CD4-positive, alpha-beta T cell (primary cell): ENCODE measurements at regions of chr19 and their contacts with region 1.

Region 1: GRCh38 chr19:19711934-19712828 is 20.7 kb downstream of the ZNF14 start:
- DNase-seq: no peak
- ATAC-seq: no peak
- H3K4me3 ChIP-seq: no peak overlapping the region
- H3K4me3 Mint-ChIP-seq: peak overlapping the region; percentile 7
- H3K27ac ChIP-seq: no peak overlapping the region
- H3K27ac Mint-ChIP-seq: peak overlapping the region; percentile 42
- H3K4me1 ChIP-seq: no peaks in the 10 kb centered on the region
- H3K4me1 Mint-ChIP-seq: no peaks in the 10 kb centered on the region
- H3K27me3 ChIP-seq: no peaks in the 10 kb centered on the region
- H3K27me3 Mint-ChIP-seq: no peaks in the 10 kb centered on the region
- CTCF ChIP-seq: no peak

Region 2: GRCh38 chr19:19677579-19677978 is 34.6 kb before region 1 on chr19:
- CTCF ChIA-PET with region 1: no interaction called
- POLR2A ChIA-PET with region 1: interaction called, 4 read pairs
- intact Hi-C with region 1: loop called in 1 of 2 experiments (anchors 5 kb)
- DNase-seq: no peak
- ATAC-seq: no peak
- H3K4me3 ChIP-seq: no peak overlapping the region
- H3K4me3 Mint-ChIP-seq: no peak overlapping the region
- H3K27ac ChIP-seq: no peak overlapping the region
- H3K27ac Mint-ChIP-seq: peak overlapping the region; percentile 55
- H3K4me1 ChIP-seq: peaks cover 19% of the 10 kb centered on the region
- H3K4me1 Mint-ChIP-seq: peaks cover 8% of the 10 kb centered on the region
- H3K27me3 ChIP-seq: no peaks in the 10 kb centered on the region
- H3K27me3 Mint-ChIP-seq: no peaks in the 10 kb centered on the region
- CTCF ChIP-seq: no peak

Region 3: DNA sequence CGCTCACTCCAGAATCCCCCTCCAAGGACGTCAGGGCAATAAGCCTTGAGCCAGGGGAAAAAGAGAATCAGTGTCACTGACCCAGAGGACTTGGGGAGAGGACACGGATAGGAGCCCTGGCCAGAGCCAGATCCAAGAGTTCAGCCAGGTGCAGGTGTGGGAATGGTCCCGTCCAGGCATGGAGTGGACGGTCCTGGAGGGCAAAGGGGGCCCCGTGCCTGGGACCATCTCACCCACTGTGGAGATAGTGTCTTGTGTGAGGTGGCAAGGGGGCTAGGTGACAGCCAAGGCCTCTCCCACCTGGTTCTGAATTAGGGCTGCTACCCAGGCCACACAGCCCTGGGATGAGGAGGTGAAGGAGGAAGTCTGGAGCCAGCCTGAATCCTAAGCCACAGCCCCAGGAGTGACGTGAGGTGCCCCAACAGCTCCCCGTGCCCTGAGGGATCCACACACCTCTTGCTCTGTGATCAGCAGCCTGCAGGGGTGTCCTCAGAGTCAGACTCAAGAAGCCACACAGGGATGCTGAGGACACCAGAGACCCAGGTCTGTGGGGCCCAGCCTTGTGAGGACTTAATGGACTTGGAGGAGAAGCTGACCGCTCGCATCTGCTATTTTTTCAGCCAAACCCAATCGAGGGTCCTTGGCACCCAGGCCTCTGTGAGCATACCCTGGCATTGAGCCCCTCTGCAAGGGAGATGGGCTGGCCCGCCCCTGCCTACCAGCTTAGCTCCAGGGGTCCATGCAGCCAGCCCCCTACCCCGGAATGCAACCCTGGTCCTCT is 37.1 kb after region 1 on chr19:
- CTCF ChIA-PET with region 1: no interaction called
- POLR2A ChIA-PET with region 1: no interaction called
- intact Hi-C with region 1: no loop called
- DNase-seq: no peak
- ATAC-seq: no peak
- H3K4me3 ChIP-seq: no peak overlapping the region
- H3K4me3 Mint-ChIP-seq: no peak overlapping the region
- H3K27ac ChIP-seq: no peak overlapping the region
- H3K27ac Mint-ChIP-seq: no peak overlapping the region
- H3K4me1 ChIP-seq: no peaks in the 10 kb centered on the region
- H3K4me1 Mint-ChIP-seq: no peaks in the 10 kb centered on the region
- H3K27me3 ChIP-seq: no peaks in the 10 kb centered on the region
- H3K27me3 Mint-ChIP-seq: no peaks in the 10 kb centered on the region
- CTCF ChIP-seq: no peak

Region 4: DNA sequence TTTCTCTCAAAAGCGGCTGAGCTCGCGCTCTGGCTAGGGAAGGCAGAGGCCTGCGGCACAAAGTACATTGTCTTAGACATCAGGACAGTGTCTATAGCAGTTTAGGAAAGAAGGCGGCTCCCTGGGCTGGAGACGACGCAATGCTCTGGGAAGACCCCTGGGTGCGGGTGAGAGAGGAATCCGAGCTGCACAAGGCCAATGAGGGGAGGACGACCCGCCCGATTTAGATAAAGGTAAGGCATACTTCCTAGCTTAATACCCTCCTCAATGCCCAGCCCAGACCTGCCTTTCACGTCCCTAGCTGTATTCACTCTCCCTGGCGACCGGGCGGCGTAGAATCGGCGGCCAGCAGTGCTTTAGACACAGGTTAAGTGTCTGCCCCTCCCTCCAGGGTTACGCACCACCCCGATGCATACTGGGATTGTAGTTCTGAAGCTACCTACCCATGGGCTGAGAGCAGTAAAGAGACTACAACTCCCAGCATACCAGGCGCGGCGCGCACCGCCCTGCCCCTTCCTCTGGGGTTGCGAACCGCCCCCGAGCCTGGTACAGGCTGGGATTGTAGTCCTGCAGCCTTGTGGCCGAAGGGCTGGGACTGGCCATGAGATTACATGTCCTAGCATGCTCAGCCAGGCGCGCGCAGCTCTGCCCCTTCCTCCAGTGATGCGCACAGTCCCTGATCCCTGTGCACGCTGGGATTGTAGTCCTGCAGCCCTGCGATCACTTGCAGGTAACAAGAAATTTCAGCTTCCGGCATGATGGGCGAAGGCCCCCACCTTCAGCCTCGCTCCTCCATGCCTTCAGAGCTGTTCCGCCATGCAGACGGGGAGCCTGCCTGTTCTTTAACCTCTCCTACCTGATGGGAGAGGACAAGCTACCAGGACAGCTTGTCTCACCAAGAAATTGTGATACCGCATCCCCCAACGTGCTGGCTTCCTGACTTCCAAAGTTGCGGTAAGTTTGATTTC is 64.1 kb after region 1 on chr19:
- CTCF ChIA-PET with region 1: no interaction called
- POLR2A ChIA-PET with region 1: no interaction called
- intact Hi-C with region 1: no loop called
- DNase-seq: peak; percentile 83 to 95 (median 88)
- ATAC-seq: peak; percentile 98
- H3K4me3 ChIP-seq: peak overlapping the region; percentile 85
- H3K4me3 Mint-ChIP-seq: peak overlapping the region; percentile 94
- H3K27ac ChIP-seq: peak overlapping the region; percentile 55 to 74
- H3K27ac Mint-ChIP-seq: peak overlapping the region; percentile 89
- H3K4me1 ChIP-seq: peaks cover 26% of the 10 kb centered on the region
- H3K4me1 Mint-ChIP-seq: peaks cover 50% of the 10 kb centered on the region
- H3K27me3 ChIP-seq: no peaks in the 10 kb centered on the region
- H3K27me3 Mint-ChIP-seq: no peaks in the 10 kb centered on the region
- CTCF ChIP-seq: no peak

Region 5: DNA sequence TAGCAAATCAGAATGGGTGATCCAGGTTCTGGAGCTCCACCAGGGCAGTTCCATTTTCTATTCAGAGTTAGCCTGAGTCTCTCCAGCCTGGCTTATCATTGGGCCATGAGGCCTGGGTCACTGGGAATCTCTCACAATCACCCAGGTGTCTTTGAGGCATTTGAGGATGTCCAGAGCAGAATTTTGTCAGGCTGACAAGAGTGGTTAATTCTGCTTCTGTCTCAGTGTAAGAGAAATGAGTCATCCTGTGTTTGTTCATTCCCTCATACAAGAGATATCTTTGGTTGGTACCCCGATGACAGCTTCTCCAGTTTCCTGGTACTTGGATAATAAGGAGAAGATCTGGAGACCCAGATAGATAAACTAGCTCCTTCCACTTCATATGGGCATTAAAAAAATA is 199.0 kb after region 1 on chr19:
- CTCF ChIA-PET with region 1: no interaction called
- POLR2A ChIA-PET with region 1: no interaction called
- intact Hi-C with region 1: no loop called
- DNase-seq: no peak
- ATAC-seq: no peak
- H3K4me3 ChIP-seq: no peak overlapping the region
- H3K4me3 Mint-ChIP-seq: no peak overlapping the region
- H3K27ac ChIP-seq: no peak overlapping the region
- H3K27ac Mint-ChIP-seq: no peak overlapping the region
- H3K4me1 ChIP-seq: no peaks in the 10 kb centered on the region
- H3K4me1 Mint-ChIP-seq: peaks cover 17% of the 10 kb centered on the region
- H3K27me3 ChIP-seq: no peaks in the 10 kb centered on the region
- H3K27me3 Mint-ChIP-seq: no peaks in the 10 kb centered on the region
- CTCF ChIP-seq: no peak